ENCODE measurements at regions of chrX and their contacts with region 1.

Region 1: DNA sequence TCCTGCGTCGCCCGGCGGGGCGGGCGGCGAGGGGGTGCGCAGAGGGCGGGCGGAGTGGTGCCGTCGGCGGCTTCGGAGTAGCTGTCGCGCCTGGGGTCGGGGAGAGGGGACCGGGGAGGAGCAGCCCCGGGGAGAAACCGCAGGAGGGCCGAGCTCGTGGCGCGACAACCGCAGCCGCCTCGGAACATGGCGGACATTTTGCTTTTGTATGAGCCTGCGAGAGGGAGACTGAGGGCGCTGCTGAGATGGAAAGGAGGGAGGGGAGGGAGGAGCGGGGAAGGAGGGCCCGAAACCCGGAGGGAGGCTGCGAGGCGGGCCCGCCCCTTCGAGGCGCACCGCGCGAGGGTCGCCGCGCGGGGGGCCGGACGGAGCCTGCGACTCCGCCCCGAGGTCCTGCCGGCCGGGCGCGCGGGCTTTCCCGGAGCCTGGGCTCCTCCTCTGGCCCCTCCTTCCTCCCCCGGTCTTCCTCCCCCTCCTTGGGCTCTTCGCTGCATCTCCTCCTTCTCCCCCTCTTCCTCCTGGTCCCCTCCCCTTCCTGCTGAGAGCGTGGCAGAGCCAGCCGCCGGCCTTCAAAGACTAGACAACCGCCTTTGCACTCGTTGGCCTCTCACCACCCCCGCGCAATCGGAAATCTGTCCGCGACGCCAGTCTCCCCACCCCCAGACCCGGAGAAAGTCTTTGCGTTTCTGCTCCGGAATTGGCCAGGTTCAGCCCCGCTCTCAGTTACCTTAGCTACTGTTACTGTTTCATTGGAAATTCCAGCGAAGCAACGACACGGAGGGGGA is 1.1 kb downstream of the INTS6L start:
- DNase-seq: peak; percentile 83
- H3K4me3 ChIP-seq: peak overlapping the region; percentile 52 to 64 (median 58)
- H3K27ac ChIP-seq: peak overlapping the region; percentile 98
- H3K4me1 ChIP-seq: no peaks in the 10 kb centered on the region
- H3K27me3 ChIP-seq: no peaks in the 10 kb centered on the region
- CTCF ChIP-seq: no peak

Region 2: DNA sequence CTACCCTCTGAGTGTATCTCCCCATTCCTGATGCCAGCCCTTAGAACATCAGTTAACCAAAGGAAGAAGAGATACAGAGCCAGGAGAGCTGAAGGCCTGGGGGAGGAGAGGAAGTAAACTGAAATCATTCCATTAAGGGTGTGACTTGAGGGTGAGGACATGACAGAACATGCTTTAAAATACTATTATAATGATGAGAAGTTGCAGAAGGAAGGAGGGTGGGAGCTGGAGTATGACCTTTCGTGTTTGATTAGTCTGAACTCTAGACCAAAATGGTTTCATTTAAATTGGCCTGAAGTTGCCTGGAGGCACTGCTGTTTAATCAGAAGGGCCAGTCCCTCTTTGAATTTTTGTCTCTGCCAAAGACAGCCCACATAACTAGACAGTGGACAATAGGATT is 10.2 kb after region 1 on chrX:
- CTCF ChIA-PET with region 1: no interaction called
- dilution Hi-C with region 1: no loop called
- in situ Hi-C with region 1: no loop called
- intact Hi-C with region 1: loop called (anchors 1 kb)
- DNase-seq: peak; percentile 79
- H3K4me3 ChIP-seq: no peak overlapping the region
- H3K27ac ChIP-seq: peak overlapping the region; percentile 75
- H3K4me1 ChIP-seq: peaks cover 37% of the 10 kb centered on the region
- H3K27me3 ChIP-seq: no peaks in the 10 kb centered on the region
- CTCF ChIP-seq: no peak

Region 3: GRCh38 chrX:135985141-135985972 is 463.8 kb after region 1 on chrX and contains the start of gene SLC9A6:
- CTCF ChIA-PET with region 1: no interaction called
- dilution Hi-C with region 1: no loop called
- in situ Hi-C with region 1: no loop called
- intact Hi-C with region 1: loop called (anchors 5 kb)
- DNase-seq: peak; percentile 50
- H3K4me3 ChIP-seq: peak within 1 kb of the TSS; percentile 62 to 70 (median 62)
- H3K27ac ChIP-seq: peak within 1 kb of the TSS; percentile 66
- H3K4me1 ChIP-seq: no peaks in the 10 kb centered on the region
- H3K27me3 ChIP-seq: no peaks in the 10 kb centered on the region
- CTCF ChIP-seq: no peak
- total RNA-seq, gene SLC9A6: 18.2 to 31.8 TPM

Region 4: GRCh38 chrX:136310418-136310817 is 788.8 kb after region 1 on chrX:
- CTCF ChIA-PET with region 1: no interaction called
- dilution Hi-C with region 1: no loop called
- in situ Hi-C with region 1: no loop called
- intact Hi-C with region 1: no loop called
- DNase-seq: peak; percentile 57
- H3K4me3 ChIP-seq: no peak overlapping the region
- H3K27ac ChIP-seq: no peak overlapping the region
- H3K4me1 ChIP-seq: no peaks in the 10 kb centered on the region
- H3K27me3 ChIP-seq: no peaks in the 10 kb centered on the region
- CTCF ChIP-seq: no peak

Measured in mammary epithelial cell (primary cell).